MCF 10A (cell line): ENCODE measurements at regions of chr21 and their contacts with region 1.

Region 1: GRCh38 chr21:44618504-44618903 is 6.6 kb downstream of the KRTAP10-8 start:
- DNase-seq: no peak
- H3K4me3 Mint-ChIP-seq: no peak overlapping the region
- H3K27ac Mint-ChIP-seq: no peak overlapping the region
- H3K4me1 Mint-ChIP-seq: peaks cover 8% of the 10 kb centered on the region
- H3K27me3 Mint-ChIP-seq: peaks cover 63% of the 10 kb centered on the region
- CTCF ChIP-seq: no peak

Region 2: GRCh38 chr21:44742418-44743153 is 124.1 kb after region 1 on chr21:
- CTCF ChIA-PET with region 1: interaction called, 3 read pairs
- POLR2A ChIA-PET with region 1: no interaction called
- intact Hi-C with region 1: loop called (anchors 2 kb)
- DNase-seq: peak; percentile 43
- H3K4me3 Mint-ChIP-seq: no peak overlapping the region
- H3K27ac Mint-ChIP-seq: no peak overlapping the region
- H3K4me1 Mint-ChIP-seq: no peaks in the 10 kb centered on the region
- H3K27me3 Mint-ChIP-seq: no peaks in the 10 kb centered on the region
- CTCF ChIP-seq: peak; percentile 41

Region 3: GRCh38 chr21:46110499-46111192 is 1492.1 kb after region 1 on chr21:
- CTCF ChIA-PET with region 1: no interaction called
- POLR2A ChIA-PET with region 1: no interaction called
- intact Hi-C with region 1: no loop called
- DNase-seq: no peak
- H3K4me3 Mint-ChIP-seq: no peak overlapping the region
- H3K27ac Mint-ChIP-seq: no peak overlapping the region
- H3K4me1 Mint-ChIP-seq: no peaks in the 10 kb centered on the region
- H3K27me3 Mint-ChIP-seq: no peaks in the 10 kb centered on the region
- CTCF ChIP-seq: no peak